Endothelial cell of umbilical vein (primary cell): ENCODE measurements at regions of chr1 and their contacts with region 1.

Region 1: GRCh38 chr1:228131766-228132165 is 8.3 kb upstream of the GUK1 start:
- DNase-seq: no peak
- H3K4me3 ChIP-seq: no peak overlapping the region
- H3K27ac ChIP-seq: no peak overlapping the region
- H3K4me1 ChIP-seq: no peaks in the 10 kb centered on the region
- H3K27me3 ChIP-seq: peaks cover 16 to 19% of the 10 kb centered on the region in 2 experiments
- CTCF ChIP-seq: no peak
- POLR2A ChIP-seq: no peak

Region 2: GRCh38 chr1:228109073-228109961 is 22.4 kb before region 1 on chr1 and contains the start of gene MRPL55:
- CTCF ChIA-PET with region 1: interaction called, 16 read pairs
- POLR2A ChIA-PET with region 1: no interaction called
- dilution Hi-C with region 1: no loop called
- intact Hi-C with region 1: no loop called
- DNase-seq: peak; percentile 98
- H3K4me3 ChIP-seq: peak within 1 kb of the TSS; percentile 29 to 92 (median 63)
- H3K27ac ChIP-seq: peak within 1 kb of the TSS; percentile 32
- H3K4me1 ChIP-seq: peaks cover 13% of the 10 kb centered on the region
- H3K27me3 ChIP-seq: no peaks in the 10 kb centered on the region
- CTCF ChIP-seq: no peak
- POLR2A ChIP-seq: peak; percentile 82
- total RNA-seq, gene MRPL55: 57.0 and 58.7 TPM in 2 replicates

Region 3: DNA sequence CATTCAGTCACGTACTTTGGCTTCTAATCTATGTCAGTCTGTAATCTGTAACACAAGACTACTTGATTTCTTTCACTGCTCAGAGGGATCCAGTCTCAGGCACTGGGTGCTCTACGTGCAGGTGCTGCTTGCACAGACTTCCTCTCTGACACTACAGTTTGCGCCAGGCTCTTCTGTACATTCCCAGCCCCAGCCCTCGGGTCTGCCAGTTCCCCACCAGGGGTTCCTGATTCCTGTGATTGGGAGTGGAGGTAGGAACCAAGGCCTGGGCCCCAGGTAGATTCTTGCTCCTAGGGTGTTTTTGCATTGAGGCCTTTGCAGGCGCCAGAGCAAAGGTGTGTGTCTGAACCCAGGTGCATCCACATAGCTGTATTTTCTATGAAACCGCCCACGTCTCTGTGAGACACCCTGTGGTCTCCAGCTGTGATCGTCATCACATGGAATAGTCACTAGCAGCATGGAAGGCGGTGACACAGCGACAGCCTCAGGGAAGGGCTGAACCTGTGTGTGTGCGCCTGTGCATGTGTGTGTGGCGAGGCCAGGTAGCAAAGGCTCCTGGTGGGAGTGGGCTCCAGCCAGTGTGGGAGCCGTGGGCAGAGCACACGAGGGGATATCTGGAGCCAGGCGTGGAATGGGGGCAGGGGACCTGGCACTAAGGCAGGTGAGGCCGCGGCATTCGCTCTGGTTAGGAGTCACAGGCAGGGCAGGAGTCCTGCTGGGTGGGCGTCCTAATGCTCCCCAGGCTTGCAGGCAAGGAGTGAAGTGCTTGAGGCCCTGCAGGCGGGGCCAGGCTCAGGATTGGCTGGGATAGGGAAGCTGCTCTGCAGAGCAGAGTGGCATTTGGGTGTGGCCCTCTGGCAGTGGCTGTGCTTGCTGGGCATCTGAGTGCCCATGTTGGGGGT is 23.2 kb after region 1 on chr1:
- CTCF ChIA-PET with region 1: interaction called, 10 read pairs
- POLR2A ChIA-PET with region 1: no interaction called
- dilution Hi-C with region 1: no loop called
- intact Hi-C with region 1: no loop called
- DNase-seq: no peak
- H3K4me3 ChIP-seq: no peak overlapping the region
- H3K27ac ChIP-seq: no peak overlapping the region
- H3K4me1 ChIP-seq: no peaks in the 10 kb centered on the region
- H3K27me3 ChIP-seq: no peaks in the 10 kb centered on the region
- CTCF ChIP-seq: no peak
- POLR2A ChIP-seq: no peak

Region 4: DNA sequence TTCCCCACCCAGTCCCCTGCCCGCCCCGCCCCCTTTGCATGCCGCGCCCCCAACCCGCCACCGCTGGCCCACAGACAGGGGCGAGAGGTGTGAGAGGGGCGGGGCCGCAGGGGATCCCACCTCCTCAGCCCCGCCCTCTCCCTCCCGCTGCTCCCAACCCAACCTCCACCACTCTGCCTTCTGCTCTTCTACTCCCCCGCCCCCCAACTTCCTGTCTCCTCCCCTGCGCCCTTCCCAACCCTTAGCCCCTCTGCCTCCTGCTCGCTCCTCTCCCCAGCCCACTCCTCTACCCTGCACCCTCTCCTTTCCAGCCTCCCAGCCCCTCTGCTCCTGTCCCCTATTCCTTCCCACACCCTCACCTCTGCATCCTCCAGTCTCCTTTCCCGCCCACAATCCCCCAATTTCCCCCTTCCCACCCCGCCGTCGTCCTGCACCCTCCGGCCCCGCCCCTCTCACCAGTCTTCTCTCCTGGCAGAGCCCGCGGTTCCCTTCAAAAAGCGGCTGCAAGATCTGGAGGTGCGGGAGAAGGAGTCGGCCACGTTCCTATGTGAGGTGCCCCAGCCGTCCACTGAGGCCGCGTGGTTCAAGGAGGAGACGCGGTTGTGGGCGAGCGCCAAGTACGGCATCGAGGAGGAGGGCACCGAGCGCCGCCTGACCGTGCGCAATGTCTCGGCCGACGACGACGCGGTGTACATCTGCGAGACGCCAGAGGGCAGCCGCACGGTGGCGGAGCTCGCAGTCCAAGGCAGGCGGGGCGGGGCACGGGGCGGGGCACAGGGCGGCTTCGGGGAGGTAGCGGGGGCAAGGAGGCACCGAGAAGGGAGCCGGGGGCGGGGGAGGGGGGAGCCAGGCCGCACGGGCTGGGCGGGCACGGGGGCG is 81.4 kb after region 1 on chr1:
- CTCF ChIA-PET with region 1: interaction called, 6 read pairs
- POLR2A ChIA-PET with region 1: no interaction called
- dilution Hi-C with region 1: no loop called
- intact Hi-C with region 1: loop called (anchors 2 kb)
- DNase-seq: peak; percentile 63
- H3K4me3 ChIP-seq: peak overlapping the region in 1 of 3 experiments; percentile 26
- H3K27ac ChIP-seq: no peak overlapping the region
- H3K4me1 ChIP-seq: no peaks in the 10 kb centered on the region
- H3K27me3 ChIP-seq: peaks cover 4 to 16% of the 10 kb centered on the region in 2 experiments
- CTCF ChIP-seq: peak; percentile 33 to 73
- POLR2A ChIP-seq: no peak

Region 5: GRCh38 chr1:228500901-228501871 is 369.4 kb after region 1 on chr1:
- CTCF ChIA-PET with region 1: interaction called, 3 read pairs
- POLR2A ChIA-PET with region 1: no interaction called
- dilution Hi-C with region 1: no loop called
- intact Hi-C with region 1: loop called (anchors 5 kb)
- DNase-seq: peak; percentile 77
- H3K4me3 ChIP-seq: no peak overlapping the region
- H3K27ac ChIP-seq: no peak overlapping the region
- H3K4me1 ChIP-seq: no peaks in the 10 kb centered on the region
- H3K27me3 ChIP-seq: peaks cover 0 to 3% of the 10 kb centered on the region in 2 experiments
- CTCF ChIP-seq: peak; percentile 91 to 94
- POLR2A ChIP-seq: no peak